ENCODE measurements at regions of chr11 and their contacts with region 1.

Region 1: DNA sequence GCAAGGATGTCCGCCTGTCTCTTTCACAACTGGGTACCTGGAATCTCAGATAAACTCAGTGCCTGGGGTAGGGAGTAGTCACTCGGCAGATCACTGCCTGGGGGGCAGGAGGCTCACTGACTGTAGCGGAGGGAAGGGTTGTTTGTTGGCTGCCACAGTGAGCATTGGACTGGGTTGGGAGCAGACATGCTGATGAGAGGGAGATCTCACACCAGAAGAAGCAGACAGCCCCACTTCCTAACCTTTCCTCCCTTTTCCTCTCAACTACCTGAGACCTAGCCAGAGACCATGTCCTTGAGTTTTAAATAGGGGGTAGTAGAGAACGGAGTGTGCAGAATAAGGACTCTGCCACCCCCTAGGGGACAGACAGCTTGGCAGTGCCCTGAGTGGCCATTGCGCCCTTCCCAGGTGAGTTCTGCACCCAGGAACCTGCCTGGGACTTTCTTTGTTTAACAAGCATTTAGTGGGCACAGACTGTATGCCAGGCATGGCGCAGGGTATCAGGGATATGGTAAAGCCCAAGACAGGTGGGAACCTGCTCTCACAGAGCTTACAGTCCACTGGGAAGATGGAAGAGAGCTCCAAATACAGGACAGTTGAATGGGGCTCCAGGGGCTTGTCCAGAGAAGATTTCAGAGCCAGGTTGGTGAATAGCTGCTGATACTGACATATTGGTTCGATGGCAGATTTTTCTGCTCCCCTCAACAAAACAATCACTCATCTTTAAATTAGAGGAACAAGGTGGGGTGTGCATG is 115.7 kb upstream of the NNMT start:
- DNase-seq: peak; percentile 59
- H3K4me3 ChIP-seq: no peak overlapping the region
- H3K27ac ChIP-seq: peak overlapping the region; percentile 90
- H3K4me1 ChIP-seq: peaks cover 31% of the 10 kb centered on the region
- H3K27me3 ChIP-seq: no peaks in the 10 kb centered on the region
- CTCF ChIP-seq: peak; percentile 52 to 61
- POLR2A ChIP-seq: no peak

Region 2: DNA sequence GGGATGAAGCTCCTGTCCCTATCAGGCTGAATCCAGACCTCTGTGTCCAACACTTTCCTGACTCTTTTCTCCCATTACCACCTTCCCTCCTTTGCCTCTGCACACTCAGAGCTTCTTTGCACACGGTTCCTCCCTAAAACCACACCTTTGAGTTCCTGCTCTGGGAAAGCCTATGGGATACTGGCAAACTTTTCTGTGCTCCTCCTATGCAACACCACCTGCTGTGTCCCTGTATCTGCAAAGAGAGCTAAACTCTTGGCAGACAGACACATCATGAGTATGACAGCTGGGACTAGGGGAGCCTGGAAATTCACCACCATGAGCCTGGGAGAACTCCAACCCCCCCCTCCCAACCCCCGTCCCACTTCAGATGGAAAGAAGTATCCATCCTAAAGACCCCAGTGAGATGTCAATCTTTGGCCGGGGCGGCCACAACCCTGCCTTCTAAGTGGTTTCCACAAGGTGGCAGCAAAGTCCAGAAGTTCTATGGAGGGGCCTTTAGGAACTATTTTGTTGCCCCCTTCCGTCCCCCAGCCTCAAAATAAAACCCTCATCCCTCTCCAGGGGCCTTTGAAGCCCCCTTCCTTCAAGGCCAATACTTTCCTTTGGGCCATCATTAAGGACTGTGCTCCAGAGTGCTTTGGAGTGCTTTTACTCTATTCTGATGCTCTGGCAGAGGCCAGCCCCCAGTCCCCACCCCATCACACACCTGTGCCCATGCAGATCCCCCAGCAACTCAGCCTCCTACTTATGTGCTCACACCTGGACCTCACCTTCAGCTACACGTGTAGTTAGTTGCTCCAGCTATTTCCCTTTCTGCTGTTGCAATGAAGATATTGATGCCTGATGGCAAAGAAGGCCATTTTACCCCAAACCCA is 186.2 kb before region 1 on chr11:
- CTCF ChIA-PET with region 1: interaction called, 23 read pairs
- POLR2A ChIA-PET with region 1: no interaction called
- dilution Hi-C with region 1: no loop called
- intact Hi-C with region 1: loop called (anchors 1 kb)
- DNase-seq: peak; percentile 11
- H3K4me3 ChIP-seq: no peak overlapping the region
- H3K27ac ChIP-seq: no peak overlapping the region
- H3K4me1 ChIP-seq: no peaks in the 10 kb centered on the region
- H3K27me3 ChIP-seq: peaks cover 2 to 4% of the 10 kb centered on the region in 2 experiments
- CTCF ChIP-seq: peak; percentile 50 to 69
- POLR2A ChIP-seq: no peak

Region 3: DNA sequence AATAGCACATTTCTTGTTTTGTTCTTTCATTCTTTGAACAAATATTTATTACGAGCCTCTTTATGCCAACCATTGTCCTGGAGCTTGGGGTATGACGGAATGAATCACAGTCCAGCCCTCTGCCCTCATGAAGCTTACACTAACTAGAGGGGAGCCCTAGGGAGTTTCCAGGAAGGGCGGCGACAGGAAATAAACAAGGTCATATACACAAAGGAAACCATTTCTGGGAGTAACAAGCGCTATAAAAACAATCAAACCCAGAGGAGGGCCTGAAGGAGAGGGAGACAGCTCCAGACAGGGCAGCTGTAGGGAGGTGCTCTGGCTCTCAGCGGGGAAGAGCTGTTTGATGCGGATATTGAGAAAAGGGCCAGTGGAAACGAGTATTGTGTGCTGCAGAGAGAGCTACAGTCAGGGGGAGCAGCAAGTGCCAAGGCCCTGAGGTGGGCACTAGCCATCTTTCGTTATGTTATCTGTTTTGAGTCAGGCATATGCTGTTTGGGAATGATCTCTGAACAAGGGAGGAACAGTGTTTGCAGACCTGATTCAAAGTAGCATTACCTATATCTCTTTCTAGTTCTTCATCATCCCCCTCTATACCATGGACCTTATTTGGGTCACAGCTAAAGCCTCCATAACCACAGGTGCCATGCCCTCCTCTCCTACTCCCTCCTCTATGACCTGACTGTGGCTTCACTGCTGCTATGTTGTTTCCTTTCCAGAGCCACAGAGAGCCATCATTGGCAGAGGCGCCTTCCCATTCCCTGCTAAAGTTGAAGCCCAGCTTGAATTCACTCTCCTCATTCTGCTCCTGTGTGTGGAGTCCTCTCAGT is 136.2 kb before region 1 on chr11:
- CTCF ChIA-PET with region 1: interaction called, 6 read pairs
- POLR2A ChIA-PET with region 1: no interaction called
- dilution Hi-C with region 1: no loop called
- intact Hi-C with region 1: loop called (anchors 1 kb)
- DNase-seq: peak; percentile 85
- H3K4me3 ChIP-seq: no peak overlapping the region
- H3K27ac ChIP-seq: peak overlapping the region; percentile 81
- H3K4me1 ChIP-seq: peaks cover 22% of the 10 kb centered on the region
- H3K27me3 ChIP-seq: no peaks in the 10 kb centered on the region
- CTCF ChIP-seq: no peak
- POLR2A ChIP-seq: peak; percentile 19

Region 4: GRCh38 chr11:114110952-114111947 is 69.2 kb before region 1 on chr11:
- CTCF ChIA-PET with region 1: interaction called, 3 read pairs
- POLR2A ChIA-PET with region 1: no interaction called
- dilution Hi-C with region 1: no loop called
- intact Hi-C with region 1: loop called (anchors 1 kb)
- DNase-seq: peak; percentile 75
- H3K4me3 ChIP-seq: peak overlapping the region in 1 of 3 experiments; percentile 32
- H3K27ac ChIP-seq: peak overlapping the region; percentile 25
- H3K4me1 ChIP-seq: peaks cover 20% of the 10 kb centered on the region
- H3K27me3 ChIP-seq: peaks cover 2% of the 10 kb centered on the region in 2 experiments
- CTCF ChIP-seq: no peak
- POLR2A ChIP-seq: no peak

Region 5: GRCh38 chr11:114166897-114167323 is 13.6 kb before region 1 on chr11:
- CTCF ChIA-PET with region 1: interaction called, 18 read pairs
- POLR2A ChIA-PET with region 1: interaction called, 11 read pairs
- dilution Hi-C with region 1: no loop called
- intact Hi-C with region 1: loop called (anchors 1 kb)
- DNase-seq: peak; percentile 89
- H3K4me3 ChIP-seq: peak overlapping the region in 1 of 3 experiments; percentile 28
- H3K27ac ChIP-seq: peak overlapping the region; percentile 58
- H3K4me1 ChIP-seq: peaks cover 71% of the 10 kb centered on the region
- H3K27me3 ChIP-seq: no peaks in the 10 kb centered on the region
- CTCF ChIP-seq: no peak
- POLR2A ChIP-seq: no peak

Region 6: GRCh38 chr11:114219559-114220349 is 39.3 kb after region 1 on chr11:
- CTCF ChIA-PET with region 1: interaction called, 19 read pairs
- POLR2A ChIA-PET with region 1: no interaction called
- dilution Hi-C with region 1: no loop called
- intact Hi-C with region 1: loop called (anchors 1 kb)
- DNase-seq: peak; percentile 95
- H3K4me3 ChIP-seq: no peak overlapping the region
- H3K27ac ChIP-seq: peak overlapping the region; percentile 83
- H3K4me1 ChIP-seq: peaks cover 17% of the 10 kb centered on the region
- H3K27me3 ChIP-seq: no peaks in the 10 kb centered on the region
- CTCF ChIP-seq: no peak
- POLR2A ChIP-seq: peak; percentile 42